ENCODE measurements at regions of chr12 and their contacts with region 1.

Region 1: DNA sequence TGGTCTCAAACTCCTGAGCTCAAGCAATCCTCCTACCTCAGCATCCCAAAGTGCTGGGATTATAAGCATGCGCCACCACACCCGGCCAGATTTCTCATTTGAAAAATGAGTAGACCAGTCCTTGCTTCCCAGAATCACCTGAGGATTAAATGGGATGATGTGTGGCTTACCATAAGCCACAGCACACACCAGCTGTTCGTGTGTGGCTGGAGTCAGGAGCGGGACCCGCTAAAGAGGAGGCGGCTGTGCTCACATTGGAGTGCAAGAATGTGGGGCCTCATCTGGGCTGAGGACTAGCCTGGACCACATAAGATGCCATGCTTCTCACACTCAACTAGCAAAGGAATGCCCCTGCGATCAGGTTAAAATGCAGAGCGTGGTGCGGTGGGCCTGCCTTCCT is 6.7 kb upstream of the ALDH2 start:
- DNase-seq: no peak
- ATAC-seq: no peak
- H3K4me3 ChIP-seq: no peak overlapping the region
- H3K27ac ChIP-seq: no peak overlapping the region
- H3K4me1 ChIP-seq: peaks cover 22% of the 10 kb centered on the region
- H3K27me3 ChIP-seq: no peaks in the 10 kb centered on the region
- CTCF ChIP-seq: no peak

Region 2: DNA sequence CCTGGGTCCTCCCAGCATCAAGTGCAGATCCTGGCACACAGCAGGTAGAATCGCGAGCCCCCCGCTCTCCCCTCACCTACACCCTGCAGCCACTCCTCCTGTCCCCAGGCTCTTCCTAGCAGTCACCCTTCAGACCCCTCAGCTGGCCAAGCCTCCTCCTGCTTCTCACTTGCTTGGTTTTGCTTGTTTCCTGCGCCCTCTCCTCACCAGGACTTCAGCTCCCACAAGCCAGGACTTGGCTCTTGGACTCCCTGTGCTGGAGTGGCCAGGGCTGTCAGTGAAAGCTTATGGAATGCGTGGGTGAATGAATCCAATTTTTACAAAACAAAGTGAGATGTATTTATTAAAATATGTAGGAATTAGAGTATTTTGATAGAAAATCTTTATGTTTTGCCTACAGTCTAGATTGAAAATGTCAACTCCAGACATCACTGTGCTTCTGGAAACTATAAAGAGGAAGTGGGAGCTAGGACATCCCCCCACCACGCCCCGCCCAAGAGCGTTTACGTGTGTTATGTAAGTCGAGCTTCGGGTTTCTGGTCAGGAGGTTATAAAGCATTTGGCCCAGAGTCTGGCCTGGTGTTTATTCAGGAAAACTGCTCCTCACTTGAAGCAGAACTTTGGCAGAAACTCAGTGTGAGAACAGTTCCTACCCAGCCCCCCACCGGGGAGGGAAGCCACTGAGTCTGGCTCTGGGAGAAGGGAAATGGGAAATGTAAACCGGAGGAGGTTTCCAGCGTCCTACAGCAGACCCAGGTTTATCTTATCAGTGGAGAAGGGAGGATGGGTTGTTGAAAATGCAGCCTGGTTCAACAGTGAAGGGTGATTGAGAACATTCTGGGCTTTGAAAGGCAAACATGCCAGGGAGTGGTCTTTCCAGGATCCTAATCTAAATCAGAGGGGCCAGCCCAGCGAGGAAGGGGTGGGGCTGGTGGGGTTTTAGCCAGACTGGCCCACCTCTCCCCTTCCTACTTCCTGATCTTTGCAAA is 15.5 kb after region 1 on chr12:
- intact Hi-C with region 1: loop called in 1 of 2 experiments (anchors 1 kb)
- DNase-seq: peak; percentile 72 to 85
- ATAC-seq: peak; percentile 52 to 71 (median 63)
- H3K4me3 ChIP-seq: peak overlapping the region; percentile 47
- H3K27ac ChIP-seq: peak overlapping the region; percentile 85
- H3K4me1 ChIP-seq: peaks cover 49% of the 10 kb centered on the region
- H3K27me3 ChIP-seq: no peaks in the 10 kb centered on the region
- CTCF ChIP-seq: no peak

Measured in psoas muscle (tissue), 8 donors.